CD8-positive, alpha-beta T cell (primary cell): ENCODE measurements at regions of chr20 and their contacts with region 1.

Region 1: DNA sequence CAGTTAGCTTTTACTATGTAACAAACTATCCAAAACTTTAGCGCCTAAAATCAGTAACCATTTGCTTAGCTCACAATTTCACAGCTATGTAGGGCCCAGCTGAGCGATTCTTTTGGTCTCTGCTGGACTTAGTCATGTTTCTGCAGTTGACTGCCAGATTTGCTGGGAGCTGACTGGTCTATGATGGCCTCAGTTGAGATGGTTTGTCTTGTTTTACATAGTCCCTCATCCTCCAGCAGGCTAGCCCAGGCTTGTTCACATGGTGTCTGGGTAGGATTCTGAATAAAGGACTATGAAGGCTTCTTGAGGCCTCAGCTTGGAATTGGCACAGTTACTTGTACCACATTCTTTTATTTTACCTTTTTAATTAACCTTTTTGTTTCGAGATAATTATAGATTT is 247.8 kb upstream of the CHD6 start:
- DNase-seq: no peak
- ATAC-seq: no peak
- H3K4me3 ChIP-seq: no peak overlapping the region
- H3K4me3 Mint-ChIP-seq: no peak overlapping the region
- H3K27ac ChIP-seq: no peak overlapping the region
- H3K27ac Mint-ChIP-seq: no peak overlapping the region
- H3K4me1 ChIP-seq: no peaks in the 10 kb centered on the region
- H3K4me1 Mint-ChIP-seq: no peaks in the 10 kb centered on the region
- H3K27me3 ChIP-seq: no peaks in the 10 kb centered on the region
- H3K27me3 Mint-ChIP-seq: peaks cover 2% of the 10 kb centered on the region
- CTCF ChIP-seq: no peak

Region 2: GRCh38 chr20:41848201-41848600 is 17.7 kb before region 1 on chr20:
- CTCF ChIA-PET with region 1: no interaction called
- POLR2A ChIA-PET with region 1: no interaction called
- intact Hi-C with region 1: loop called in 1 of 2 experiments (anchors 1 kb)
- DNase-seq: no peak
- ATAC-seq: no peak
- H3K4me3 ChIP-seq: no peak overlapping the region
- H3K4me3 Mint-ChIP-seq: no peak overlapping the region
- H3K27ac ChIP-seq: no peak overlapping the region
- H3K27ac Mint-ChIP-seq: no peak overlapping the region
- H3K4me1 ChIP-seq: no peaks in the 10 kb centered on the region
- H3K4me1 Mint-ChIP-seq: no peaks in the 10 kb centered on the region
- H3K27me3 ChIP-seq: no peaks in the 10 kb centered on the region
- H3K27me3 Mint-ChIP-seq: peaks cover 7% of the 10 kb centered on the region
- CTCF ChIP-seq: no peak

Region 3: GRCh38 chr20:41910558-41910957 is 44.6 kb after region 1 on chr20:
- CTCF ChIA-PET with region 1: no interaction called
- POLR2A ChIA-PET with region 1: no interaction called
- intact Hi-C with region 1: no loop called
- DNase-seq: no peak
- ATAC-seq: no peak
- H3K4me3 ChIP-seq: no peak overlapping the region
- H3K4me3 Mint-ChIP-seq: no peak overlapping the region
- H3K27ac ChIP-seq: no peak overlapping the region
- H3K27ac Mint-ChIP-seq: no peak overlapping the region
- H3K4me1 ChIP-seq: no peaks in the 10 kb centered on the region
- H3K4me1 Mint-ChIP-seq: no peaks in the 10 kb centered on the region
- H3K27me3 ChIP-seq: no peaks in the 10 kb centered on the region
- H3K27me3 Mint-ChIP-seq: peaks cover 6% of the 10 kb centered on the region
- CTCF ChIP-seq: no peak